GM13977 (cell line): ENCODE measurements at regions of chr1 and their contacts with region 1.

Region 1: DNA sequence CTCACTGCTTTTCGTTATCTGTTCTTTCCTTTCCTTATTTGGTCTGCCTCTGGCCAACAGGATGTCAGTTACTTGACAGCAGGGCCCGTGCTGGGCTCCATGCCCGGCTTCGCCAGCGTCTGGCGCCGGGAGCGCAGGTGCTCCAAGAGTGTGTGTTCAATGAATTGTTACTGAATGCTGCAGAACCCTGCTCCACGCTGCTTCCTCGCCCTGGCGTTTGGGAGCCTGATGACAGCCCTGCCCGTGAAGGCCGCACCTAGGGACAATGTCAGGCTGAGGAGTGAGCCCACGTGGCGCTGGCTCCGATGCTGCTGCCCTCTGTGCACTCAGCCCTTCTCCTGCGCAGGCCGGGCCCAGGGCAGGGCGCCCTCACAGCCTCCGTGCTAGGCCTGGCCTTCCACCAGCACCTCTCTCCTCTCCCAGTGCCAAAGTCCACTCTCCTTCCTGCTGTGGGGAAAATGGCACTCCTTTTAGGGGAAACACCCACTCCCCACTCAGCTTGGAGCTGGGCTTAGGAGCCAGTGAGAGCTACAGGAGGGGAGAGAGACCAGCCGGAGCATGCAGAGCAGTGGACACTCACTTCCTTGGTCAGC is 51.4 kb downstream of the ACBD3 start:
- DNase-seq: peak; percentile 6
- CTCF ChIP-seq: no peak

Region 2: DNA sequence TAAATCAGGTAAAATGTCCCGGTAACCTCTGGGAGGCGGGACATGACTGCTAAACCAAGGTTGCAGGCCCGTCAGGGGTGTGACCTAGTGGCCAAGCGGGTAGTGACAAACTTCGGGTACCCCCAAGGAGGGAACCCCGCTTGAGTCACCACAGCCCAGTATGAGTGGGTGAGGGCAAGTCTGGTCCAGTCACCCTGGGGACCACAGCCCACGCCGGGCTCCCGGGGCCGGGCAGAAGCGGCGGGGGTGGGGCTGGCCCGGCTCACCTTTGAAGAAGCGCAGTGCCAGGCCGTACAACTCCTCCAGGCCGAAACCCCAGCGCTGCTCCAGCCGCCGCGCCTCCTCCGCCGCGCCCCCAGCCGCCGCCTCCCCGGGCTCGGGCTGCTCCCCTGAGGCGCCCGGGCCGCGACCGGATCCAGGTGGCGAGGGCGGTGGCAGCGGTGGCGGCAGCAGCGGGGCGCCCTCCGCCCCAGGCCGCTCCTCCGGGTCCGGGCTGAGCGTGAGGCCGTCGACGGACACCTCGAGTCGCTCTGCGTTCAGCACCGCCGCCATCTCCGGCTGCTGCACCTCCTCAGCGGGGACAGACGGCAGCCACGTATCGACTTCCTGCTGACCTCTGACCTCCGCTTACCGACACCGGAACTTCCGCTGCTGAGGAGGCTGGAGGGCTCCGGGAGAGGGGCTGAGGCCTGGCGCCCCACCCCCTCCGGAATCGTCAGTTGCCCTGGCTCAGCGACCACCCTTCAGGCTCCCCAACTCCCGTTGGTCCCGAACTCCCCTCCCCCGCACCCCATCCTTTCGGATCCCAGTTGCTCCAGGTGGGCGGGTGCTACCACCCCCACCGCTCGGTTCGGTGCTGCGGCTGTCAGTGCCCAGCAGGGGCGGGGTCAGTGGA is 51.2 kb after region 1 on chr1 and contains the start of gene ACBD3:
- in situ Hi-C with region 1: loop called (anchors 5 kb)
- DNase-seq: peak; percentile 95
- CTCF ChIP-seq: no peak

Region 3: DNA sequence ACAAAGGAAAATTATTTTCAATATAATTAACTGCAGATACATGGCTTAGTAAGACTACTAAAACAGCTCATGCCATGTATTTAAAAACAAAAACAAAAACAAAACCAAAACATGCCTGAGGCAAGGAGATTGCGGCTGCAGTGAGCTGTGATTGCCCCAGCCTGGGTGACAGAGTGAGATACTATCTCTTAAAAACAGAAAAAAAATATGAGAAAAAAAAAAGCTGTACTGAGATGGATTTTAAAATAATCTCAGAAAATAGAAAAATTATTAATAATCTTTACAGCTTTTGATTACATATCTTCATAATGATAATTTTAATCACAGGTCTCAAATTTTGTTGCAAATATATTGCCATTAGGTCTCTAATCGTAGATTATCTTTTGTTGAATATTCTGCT is 197.8 kb after region 1 on chr1:
- in situ Hi-C with region 1: loop called (anchors 10 kb)
- DNase-seq: no peak
- CTCF ChIP-seq: no peak

Region 4: GRCh38 chr1:226355669-226356551 is 220.8 kb after region 1 on chr1:
- in situ Hi-C with region 1: no loop called
- DNase-seq: no peak
- CTCF ChIP-seq: no peak